ENCODE measurements at regions of chr3 and their contacts with region 1.

Region 1: DNA sequence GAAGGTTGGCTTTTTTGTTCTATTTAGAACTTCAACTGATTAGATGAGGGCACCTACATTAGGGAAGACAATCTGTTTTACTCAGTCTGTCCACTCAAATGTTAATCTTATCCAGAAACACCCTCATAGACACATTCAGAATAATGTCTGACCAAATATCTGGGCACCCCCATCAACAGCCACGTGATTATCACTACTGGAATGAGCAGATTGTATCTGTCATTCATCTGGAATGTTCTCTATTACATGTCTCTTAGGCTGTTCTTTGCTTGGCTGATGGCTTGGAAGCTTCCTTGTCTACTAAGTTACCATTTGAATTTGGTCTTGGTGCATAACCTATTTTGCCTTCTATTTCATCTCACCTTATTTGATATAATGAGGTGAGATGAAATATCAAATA is 15.7 kb upstream of the LRRC58 start:
- DNase-seq: no peak
- H3K4me3 ChIP-seq: no peak overlapping the region
- H3K27ac ChIP-seq: no peak overlapping the region
- H3K4me1 ChIP-seq: no peaks in the 10 kb centered on the region
- H3K27me3 ChIP-seq: peaks cover 0 to 2% (median 0%) of the 10 kb centered on the region in 4 experiments; a peak in 1 of 7 replicates
- CTCF ChIP-seq: no peak
- EP300 ChIP-seq: no peak
- POLR2A ChIP-seq: no peak
- RAD21 ChIP-seq: no peak

Region 2: DNA sequence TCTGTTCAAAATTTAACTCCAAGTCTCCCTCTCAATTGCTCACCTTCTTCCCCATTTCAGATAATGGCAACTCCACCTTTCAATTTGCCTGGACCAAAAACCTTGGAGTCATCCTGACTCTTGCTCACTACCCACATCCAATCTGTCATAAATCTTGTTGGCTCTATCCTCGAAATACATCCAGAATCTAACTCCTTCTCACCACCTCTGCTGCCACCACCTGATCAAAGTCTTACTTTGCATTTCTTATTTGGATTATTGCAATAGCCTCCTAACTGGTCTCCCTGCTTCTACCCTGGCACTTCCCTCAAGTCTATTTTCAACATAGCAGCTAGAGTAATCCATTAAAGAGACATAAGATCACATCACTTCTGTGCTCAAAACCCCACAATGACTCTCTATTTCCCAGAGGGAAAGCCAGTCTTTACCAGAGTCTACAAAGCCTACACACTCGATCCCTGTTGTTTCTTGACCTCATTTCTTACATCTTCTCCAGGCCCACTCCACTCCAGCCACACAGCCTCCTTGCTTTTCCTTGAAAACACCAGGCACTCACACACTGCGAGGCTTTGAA is 166.4 kb before region 1 on chr3:
- CTCF ChIA-PET with region 1: no interaction called
- POLR2A ChIA-PET with region 1: no interaction called
- DNase-seq: no peak
- H3K4me3 ChIP-seq: no peak overlapping the region
- H3K27ac ChIP-seq: no peak overlapping the region
- H3K4me1 ChIP-seq: no peaks in the 10 kb centered on the region
- H3K27me3 ChIP-seq: no peaks in the 10 kb centered on the region
- CTCF ChIP-seq: no peak
- EP300 ChIP-seq: no peak
- POLR2A ChIP-seq: no peak
- RAD21 ChIP-seq: peak; percentile 28 to 47; a peak in 3 of 4 replicates

Region 3: GRCh38 chr3:120348981-120349818 is 15.6 kb before region 1 on chr3 and contains the start of gene LRRC58:
- CTCF ChIA-PET with region 1: interaction called, 6 read pairs
- POLR2A ChIA-PET with region 1: interaction called, 10 read pairs
- DNase-seq: peak; percentile 31 to 86
- H3K4me3 ChIP-seq: peak within 1 kb of the TSS; percentile 73 to 88 (median 76)
- H3K27ac ChIP-seq: peak within 1 kb of the TSS; percentile 25; the same call in 1 of the 2 replicates
- H3K4me1 ChIP-seq: peaks cover 0 to 4% (median 2%) of the 10 kb centered on the region in 4 experiments; a peak in 2 of 7 replicates
- H3K27me3 ChIP-seq: peaks cover 0 to 6% (median 3%) of the 10 kb centered on the region in 4 experiments; a peak in 3 of 7 replicates
- CTCF ChIP-seq: peak; percentile 18 to 25 (median 24)
- EP300 ChIP-seq: peak; percentile 1 to 4; a peak in 2 of 3 replicates
- POLR2A ChIP-seq: peak in 1 of 2 experiments; percentile 90; a peak in 2 of 3 replicates
- RAD21 ChIP-seq: no peak; a peak in 1 of 4 replicates
- total RNA-seq, gene LRRC58: 15.4 TPM in 2 replicates

Measured in H1 (cell line).